Endothelial cell of umbilical vein (primary cell): ENCODE measurements at regions of chr7 and their contacts with region 1.

Region 1: GRCh38 chr7:31443457-31443856 is 70.4 kb upstream of the ITPRID1 start:
- DNase-seq: peak; percentile 48
- H3K4me3 ChIP-seq: no peak overlapping the region
- H3K27ac ChIP-seq: no peak overlapping the region
- H3K4me1 ChIP-seq: no peaks in the 10 kb centered on the region
- H3K27me3 ChIP-seq: peaks cover 0 to 4% of the 10 kb centered on the region in 2 experiments
- CTCF ChIP-seq: peak; percentile 63 to 67
- POLR2A ChIP-seq: no peak

Region 2: DNA sequence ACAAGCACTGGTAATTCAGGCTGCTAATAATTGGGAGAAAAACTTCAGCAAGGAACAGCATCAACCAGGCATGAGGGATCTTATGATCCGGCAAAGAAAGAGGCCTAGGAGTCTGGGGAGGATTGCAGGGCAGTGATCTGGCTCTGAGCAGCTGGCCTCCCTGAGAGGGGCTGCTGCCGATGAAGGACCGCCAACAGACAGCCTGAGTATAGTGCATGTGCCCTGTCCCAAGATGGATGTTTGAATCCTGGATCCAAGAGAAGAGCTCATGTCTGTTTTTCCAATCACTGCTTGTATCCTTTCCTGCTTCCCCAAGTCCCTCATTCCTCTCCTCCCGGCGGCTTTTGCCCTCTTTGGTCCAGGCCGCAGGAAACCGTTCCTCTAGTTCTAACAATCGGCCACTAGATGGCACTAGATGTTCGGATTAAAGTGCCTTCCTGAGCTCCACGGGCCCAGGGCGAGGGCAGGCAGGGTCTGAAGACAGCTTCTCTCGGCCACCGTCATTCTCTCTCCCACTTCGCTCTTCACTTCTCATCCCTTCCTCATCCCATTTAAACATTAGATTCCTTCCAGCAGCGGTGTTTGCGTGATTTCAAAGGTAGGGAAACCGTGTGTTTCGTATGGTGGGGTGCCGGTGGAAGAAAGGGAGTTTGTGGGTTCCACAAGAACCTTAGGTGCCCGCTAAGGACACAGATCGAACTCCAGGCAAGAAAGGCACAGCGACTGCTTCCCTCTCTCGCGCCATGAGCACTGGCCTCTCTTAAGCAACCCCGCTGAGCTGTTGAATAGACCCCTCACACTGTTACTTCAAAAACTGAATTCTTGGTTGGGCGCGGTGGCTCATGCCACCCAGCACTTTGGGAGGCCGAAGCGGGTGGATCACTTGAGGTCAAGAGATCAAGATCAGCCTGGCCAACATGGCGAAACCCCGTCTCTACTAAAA is 308.9 kb before region 1 on chr7:
- CTCF ChIA-PET with region 1: interaction called, 18 read pairs
- POLR2A ChIA-PET with region 1: no interaction called
- dilution Hi-C with region 1: no loop called
- intact Hi-C with region 1: loop called (anchors 2 kb)
- DNase-seq: peak; percentile 58
- H3K4me3 ChIP-seq: no peak overlapping the region
- H3K27ac ChIP-seq: no peak overlapping the region
- H3K4me1 ChIP-seq: no peaks in the 10 kb centered on the region
- H3K27me3 ChIP-seq: no peaks in the 10 kb centered on the region
- CTCF ChIP-seq: peak; percentile 64 to 72
- POLR2A ChIP-seq: no peak

Region 3: GRCh38 chr7:31299336-31299735 is 144.1 kb before region 1 on chr7:
- CTCF ChIA-PET with region 1: no interaction called
- POLR2A ChIA-PET with region 1: no interaction called
- dilution Hi-C with region 1: no loop called
- intact Hi-C with region 1: no loop called
- DNase-seq: no peak
- H3K4me3 ChIP-seq: no peak overlapping the region
- H3K27ac ChIP-seq: no peak overlapping the region
- H3K4me1 ChIP-seq: no peaks in the 10 kb centered on the region
- H3K27me3 ChIP-seq: no peaks in the 10 kb centered on the region
- CTCF ChIP-seq: no peak
- POLR2A ChIP-seq: no peak

Region 4: DNA sequence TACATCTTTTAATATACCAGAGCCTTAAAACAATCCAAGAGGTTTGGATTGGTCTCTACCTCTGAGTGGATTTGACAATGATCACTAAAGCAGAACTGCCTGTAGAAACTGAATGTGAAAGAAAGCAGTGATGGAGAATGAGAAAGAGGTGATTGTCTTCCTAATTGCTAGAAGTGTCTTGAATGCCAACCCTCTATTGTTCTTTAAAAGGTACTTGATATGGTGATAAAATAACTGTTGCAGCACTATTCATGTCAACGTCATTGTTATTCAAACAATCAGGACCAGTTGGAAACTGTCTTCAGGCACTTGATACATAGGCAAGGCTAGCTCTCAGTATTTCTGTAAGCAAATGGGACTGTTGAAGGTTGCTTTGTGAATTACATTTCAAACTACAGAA is 22.6 kb after region 1 on chr7:
- CTCF ChIA-PET with region 1: interaction called, 11 read pairs
- POLR2A ChIA-PET with region 1: no interaction called
- dilution Hi-C with region 1: no loop called
- intact Hi-C with region 1: no loop called
- DNase-seq: no peak
- H3K4me3 ChIP-seq: no peak overlapping the region
- H3K27ac ChIP-seq: no peak overlapping the region
- H3K4me1 ChIP-seq: no peaks in the 10 kb centered on the region
- H3K27me3 ChIP-seq: no peaks in the 10 kb centered on the region
- CTCF ChIP-seq: no peak
- POLR2A ChIP-seq: no peak

Region 5: DNA sequence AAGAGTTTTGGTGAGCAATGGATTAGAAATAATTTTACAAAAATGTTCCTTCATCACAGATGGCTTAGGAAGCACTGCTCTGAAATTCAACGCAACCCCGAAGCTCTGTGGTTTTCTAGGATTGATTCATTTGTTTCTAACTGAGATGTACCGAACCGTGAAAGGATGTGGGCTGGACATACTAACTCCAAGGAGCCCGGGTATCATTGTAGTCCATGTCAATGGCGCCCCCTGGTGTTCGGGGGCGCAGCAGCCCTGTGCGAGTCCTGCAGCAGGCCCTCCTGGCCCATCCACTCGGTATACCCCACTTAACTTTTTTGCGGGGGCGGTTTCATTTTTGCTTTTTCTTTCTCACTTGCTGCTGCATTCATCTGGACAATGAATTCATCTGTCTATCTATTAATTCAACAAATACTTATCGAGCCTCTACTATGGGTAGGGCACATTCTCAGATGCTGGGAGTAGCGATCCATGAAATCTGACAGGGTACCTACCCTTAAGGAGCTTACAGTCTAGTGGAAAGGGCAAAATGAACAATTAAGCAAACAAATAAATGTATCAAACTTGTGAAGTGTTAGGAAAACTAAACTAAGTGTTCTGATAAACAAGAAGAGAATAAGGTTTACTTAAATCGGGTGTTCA is 45.2 kb after region 1 on chr7:
- CTCF ChIA-PET with region 1: interaction called, 5 read pairs
- POLR2A ChIA-PET with region 1: no interaction called
- dilution Hi-C with region 1: no loop called
- intact Hi-C with region 1: loop called (anchors 1 kb)
- DNase-seq: peak; percentile 29
- H3K4me3 ChIP-seq: no peak overlapping the region
- H3K27ac ChIP-seq: no peak overlapping the region
- H3K4me1 ChIP-seq: no peaks in the 10 kb centered on the region
- H3K27me3 ChIP-seq: no peaks in the 10 kb centered on the region
- CTCF ChIP-seq: peak; percentile 58 to 78
- POLR2A ChIP-seq: no peak

Region 6: GRCh38 chr7:31735991-31736982 is 292.8 kb after region 1 on chr7:
- CTCF ChIA-PET with region 1: interaction called, 12 read pairs
- POLR2A ChIA-PET with region 1: no interaction called
- dilution Hi-C with region 1: no loop called
- intact Hi-C with region 1: loop called (anchors 1 kb)
- DNase-seq: peak; percentile 52
- H3K4me3 ChIP-seq: no peak overlapping the region
- H3K27ac ChIP-seq: no peak overlapping the region
- H3K4me1 ChIP-seq: no peaks in the 10 kb centered on the region
- H3K27me3 ChIP-seq: no peaks in the 10 kb centered on the region
- CTCF ChIP-seq: peak; percentile 77 to 78
- POLR2A ChIP-seq: no peak